ENCODE measurements at regions of chr6 and their contacts with region 1.

Region 1: GRCh38 chr6:112237595-112237994 is 16.8 kb downstream of the LAMA4 start:
- H3K4me3 ChIP-seq: no peak overlapping the region
- H3K27ac ChIP-seq: no peak overlapping the region
- H3K4me1 ChIP-seq: peaks cover 30% of the 10 kb centered on the region
- CTCF ChIP-seq: no peak

Region 2: GRCh38 chr6:112188906-112189305 is 48.7 kb before region 1 on chr6:
- CTCF ChIA-PET with region 1: no interaction called
- POLR2A ChIA-PET with region 1: no interaction called
- H3K4me3 ChIP-seq: no peak overlapping the region
- H3K27ac ChIP-seq: peak overlapping the region; percentile 60
- H3K4me1 ChIP-seq: peaks cover 16% of the 10 kb centered on the region
- CTCF ChIP-seq: no peak

Region 3: DNA sequence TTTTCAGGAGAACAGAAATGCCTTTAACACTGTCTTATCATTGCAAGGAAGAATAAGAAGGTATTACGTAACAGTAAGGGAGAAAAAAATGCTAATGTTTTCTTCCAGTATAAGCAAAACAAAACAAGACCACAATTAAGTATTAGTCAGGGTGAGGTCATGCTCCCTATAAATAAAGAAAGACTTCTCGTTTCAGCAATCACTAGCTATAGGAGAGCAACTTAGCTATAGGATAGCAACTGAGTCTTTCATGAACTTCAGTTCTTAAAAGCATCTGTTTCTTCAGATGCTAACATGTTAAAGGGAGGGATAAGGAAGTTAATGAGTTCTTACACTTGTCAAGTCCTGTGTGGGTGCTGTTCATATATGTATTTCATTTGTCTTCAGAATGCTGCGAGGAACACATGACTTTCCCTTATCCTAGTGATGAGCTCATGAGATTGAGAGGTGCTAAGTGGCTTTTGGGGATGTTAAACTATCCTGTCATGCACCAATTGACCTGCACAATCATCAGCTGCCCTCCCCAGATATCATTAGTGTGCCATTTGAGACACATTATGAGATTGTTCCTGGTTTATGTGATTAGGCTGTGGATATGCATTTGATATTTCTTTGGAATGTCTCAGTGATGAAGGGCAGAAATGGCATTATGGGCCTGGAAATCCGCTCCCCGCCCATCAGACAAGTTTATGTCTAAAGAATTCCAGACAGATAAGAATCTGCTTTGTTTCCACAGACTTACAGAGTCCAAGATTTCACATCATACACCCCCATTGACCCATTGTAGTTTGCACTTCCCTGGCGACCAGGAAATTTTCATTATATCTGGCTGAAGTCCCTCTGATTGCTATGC is 20.7 kb before region 1 on chr6:
- CTCF ChIA-PET with region 1: interaction called, 3 read pairs
- POLR2A ChIA-PET with region 1: interaction called, 22 read pairs
- H3K4me3 ChIP-seq: no peak overlapping the region
- H3K27ac ChIP-seq: peak overlapping the region; percentile 48
- H3K4me1 ChIP-seq: peaks cover 41% of the 10 kb centered on the region
- CTCF ChIP-seq: no peak

Measured in HEK293 (cell line).